ENCODE measurements at regions of chr20 and their contacts with region 1.

Region 1: DNA sequence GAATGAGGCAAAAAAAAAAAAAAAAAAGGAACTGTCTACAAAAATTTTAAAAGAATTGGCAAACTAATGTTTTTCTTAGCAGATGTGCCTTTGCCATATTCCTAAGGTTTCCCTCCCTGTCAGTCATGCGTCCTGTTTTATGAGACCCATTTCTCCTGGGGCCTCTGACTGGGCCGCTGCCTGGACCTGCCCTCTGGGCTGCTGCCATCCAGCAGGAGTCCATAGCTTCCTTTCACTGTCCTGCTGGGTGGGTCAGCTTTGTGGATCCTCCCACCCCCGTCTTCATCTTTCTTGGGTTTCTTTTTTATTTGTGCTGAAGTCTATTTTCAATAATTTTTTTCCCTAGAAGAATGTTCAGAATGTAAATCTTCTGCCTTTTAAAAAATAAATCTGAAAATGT is 110.8 kb upstream of the SCP2D1 start:
- DNase-seq: peak; percentile 6 to 56
- ATAC-seq: peak in 5 of 8 donors; percentile 50 to 89 (median 71)
- H3K4me3 ChIP-seq: no peak overlapping the region
- H3K27ac ChIP-seq: peak overlapping the region in 1 of 10 donors; percentile 8
- H3K4me1 ChIP-seq: peaks cover 0 to 29% (median 11%) of the 10 kb centered on the region in 9 donors
- H3K27me3 ChIP-seq: no peaks in the 10 kb centered on the region
- CTCF ChIP-seq: no peak

Region 2: GRCh38 chr20:18715564-18715963 is 12.8 kb after region 1 on chr20:
- intact Hi-C with region 1: loop called in 1 of 10 experiments (anchors 1 kb)
- DNase-seq: no peak
- ATAC-seq: no peak
- H3K4me3 ChIP-seq: no peak overlapping the region
- H3K27ac ChIP-seq: no peak overlapping the region
- H3K4me1 ChIP-seq: no peaks in the 10 kb centered on the region
- H3K27me3 ChIP-seq: no peaks in the 10 kb centered on the region
- CTCF ChIP-seq: no peak

Region 3: DNA sequence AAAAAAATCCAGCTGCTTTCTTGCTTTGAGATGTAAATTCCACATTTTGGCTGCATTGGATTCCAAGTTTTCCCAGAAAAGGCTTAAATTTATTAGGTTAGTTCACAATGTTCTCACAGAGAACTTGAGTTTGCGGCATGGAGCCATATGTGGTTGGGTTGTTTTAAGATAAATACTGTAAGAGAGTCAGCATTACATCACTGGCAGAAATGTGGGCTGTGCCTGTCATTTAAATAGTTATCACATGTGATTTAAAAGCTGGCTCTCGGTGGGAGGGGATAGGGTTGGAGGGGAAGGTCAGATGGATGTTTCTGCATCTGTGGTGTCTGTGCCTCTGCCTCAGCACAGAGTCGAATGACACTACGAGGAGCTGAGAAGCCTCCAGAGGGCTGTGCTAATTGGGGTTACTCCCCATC is 37.0 kb after region 1 on chr20:
- intact Hi-C with region 1: loop called in 1 of 10 experiments (anchors 5 kb)
- DNase-seq: no peak
- ATAC-seq: peak in 6 of 8 donors; percentile 41 to 77 (median 59)
- H3K4me3 ChIP-seq: peak overlapping the region in 1 of 10 donors; percentile 3
- H3K27ac ChIP-seq: peak overlapping the region in 2 of 10 donors; percentile 25 to 44
- H3K4me1 ChIP-seq: peaks cover 0 to 22% (median 0%) of the 10 kb centered on the region in 9 donors
- H3K27me3 ChIP-seq: no peaks in the 10 kb centered on the region
- CTCF ChIP-seq: no peak